Activated CD8-positive, alpha-beta T cell treated with anti-CD3 and anti-CD28 coated beads, Interleukin-2, amount 10 ng/mL, durations not matched to agents 7 days and 5 days (primary cell): ENCODE measurements at regions of chr10 and their contacts with region 1.

Region 1: GRCh38 chr10:97701438-97702069 is 12.0 kb upstream of the MARVELD1 start:
- DNase-seq: peak; percentile 70
- ATAC-seq: peak; percentile 91
- H3K4me3 Mint-ChIP-seq: no peak overlapping the region
- H3K27ac Mint-ChIP-seq: no peak overlapping the region
- H3K4me1 Mint-ChIP-seq: no peaks in the 10 kb centered on the region
- H3K27me3 Mint-ChIP-seq: peaks cover 18% of the 10 kb centered on the region

Region 2: DNA sequence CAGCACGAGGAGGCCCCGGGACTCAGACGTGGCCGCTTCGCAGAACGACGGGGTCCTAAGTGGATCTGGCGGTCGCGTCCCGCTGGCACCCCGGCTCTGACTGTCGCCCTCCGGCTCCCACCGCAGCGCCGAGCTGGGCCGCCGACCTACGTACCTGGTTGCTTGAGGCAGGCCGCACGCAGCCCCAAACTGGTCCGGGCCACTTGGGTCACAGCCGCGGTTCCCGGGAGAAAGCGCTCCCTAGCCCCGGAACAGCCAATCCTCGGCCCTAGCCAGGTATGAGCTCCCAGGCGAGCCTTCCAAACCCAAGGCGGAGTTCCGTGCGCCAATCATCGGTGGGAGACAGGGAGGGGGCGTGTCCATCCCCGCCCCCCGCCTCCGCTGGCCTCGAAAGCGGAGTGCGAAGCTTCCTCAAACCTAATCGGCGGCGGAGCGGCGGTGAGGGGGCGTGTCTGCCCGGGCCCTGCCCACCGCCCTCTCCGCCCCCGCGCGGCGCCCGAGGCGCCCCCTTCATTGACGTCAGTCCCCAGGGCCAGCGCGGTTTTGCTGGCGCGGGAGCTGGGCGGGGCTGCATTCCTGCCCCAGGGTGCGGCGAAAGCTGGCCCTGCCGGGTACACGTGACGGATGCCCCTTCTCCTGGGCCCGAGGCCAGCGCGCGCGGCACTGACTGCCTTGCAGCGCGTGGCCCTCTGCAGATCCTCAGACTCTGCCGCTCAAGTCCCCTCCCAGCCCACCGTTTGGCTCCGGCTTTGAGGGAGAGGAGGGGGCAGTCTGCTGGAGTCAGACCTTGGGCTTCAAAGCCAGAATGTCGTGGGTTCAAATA is 14.4 kb before region 1 on chr10 and contains the start of gene AVPI1:
- CTCF ChIA-PET with region 1: interaction called, 59 read pairs
- POLR2A ChIA-PET with region 1: interaction called, 7 read pairs
- DNase-seq: peak; percentile 95
- ATAC-seq: peak; percentile 97
- H3K4me3 Mint-ChIP-seq: peak within 1 kb of the TSS; percentile 82
- H3K27ac Mint-ChIP-seq: peak within 1 kb of the TSS; percentile 74
- H3K4me1 Mint-ChIP-seq: peaks cover 17% of the 10 kb centered on the region
- H3K27me3 Mint-ChIP-seq: no peaks in the 10 kb centered on the region
- total RNA-seq, gene AVPI1: 1.1 to 1.7 TPM

Region 3: GRCh38 chr10:97724341-97724941 is 22.9 kb after region 1 on chr10:
- CTCF ChIA-PET with region 1: interaction called, 75 read pairs
- POLR2A ChIA-PET with region 1: no interaction called
- DNase-seq: no peak
- ATAC-seq: no peak
- H3K4me3 Mint-ChIP-seq: no peak overlapping the region
- H3K27ac Mint-ChIP-seq: no peak overlapping the region
- H3K4me1 Mint-ChIP-seq: no peaks in the 10 kb centered on the region
- H3K27me3 Mint-ChIP-seq: peaks cover 10% of the 10 kb centered on the region

Region 4: DNA sequence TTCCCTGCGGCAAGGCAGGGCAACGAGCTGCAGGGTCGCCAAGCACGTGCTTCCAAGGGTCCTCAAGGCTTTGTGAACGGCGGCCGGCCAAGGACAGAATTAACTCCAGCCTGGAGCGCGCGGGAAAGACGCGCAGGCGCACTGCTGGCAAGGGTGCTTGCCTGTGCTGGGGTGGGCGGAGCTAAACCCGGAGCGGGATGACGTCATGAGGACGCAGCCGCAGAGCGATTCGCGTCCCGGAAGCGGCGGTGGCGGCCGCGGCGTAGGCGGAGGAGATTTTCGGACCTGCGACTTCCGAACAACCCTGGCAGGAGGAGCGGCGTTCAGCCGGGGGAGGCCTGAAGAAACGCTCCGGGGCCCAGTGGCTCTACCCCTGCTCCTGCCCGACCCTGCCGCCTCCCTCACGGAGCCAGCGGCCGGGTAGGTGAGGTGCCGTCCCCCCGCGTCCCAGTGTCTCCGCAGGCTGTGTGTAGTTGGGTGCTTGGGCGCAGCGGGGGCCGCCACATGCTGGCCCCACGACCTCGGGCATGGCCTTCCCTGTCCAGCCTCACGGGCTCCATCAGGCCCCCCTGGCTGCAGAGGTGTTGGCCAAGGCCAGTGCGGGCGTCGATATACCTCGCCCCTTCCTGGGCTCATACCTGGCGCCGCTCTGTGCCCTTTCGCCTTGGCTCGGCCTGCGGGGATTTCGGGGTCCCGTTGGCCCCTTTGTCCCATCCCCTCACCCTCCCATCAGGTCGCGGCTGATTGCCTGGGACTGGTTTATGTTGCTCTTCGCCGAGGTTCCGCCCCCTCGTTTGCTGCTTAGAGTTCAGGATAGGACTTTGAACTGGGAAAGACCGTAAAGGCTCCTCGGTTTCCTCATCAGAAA is 35.6 kb after region 1 on chr10 and contains the start of gene ZFYVE27:
- CTCF ChIA-PET with region 1: interaction called, 75 read pairs
- POLR2A ChIA-PET with region 1: no interaction called
- DNase-seq: peak; percentile 97
- ATAC-seq: peak; percentile 86
- H3K4me3 Mint-ChIP-seq: peak within 1 kb of the TSS; percentile 90
- H3K27ac Mint-ChIP-seq: peak within 1 kb of the TSS; percentile 95
- H3K4me1 Mint-ChIP-seq: peaks cover 46% of the 10 kb centered on the region
- H3K27me3 Mint-ChIP-seq: peaks cover 4% of the 10 kb centered on the region
- total RNA-seq, gene ZFYVE27: 23.8 to 27.3 TPM

Region 5: GRCh38 chr10:97764519-97764931 is 63.0 kb after region 1 on chr10:
- CTCF ChIA-PET with region 1: no interaction called
- POLR2A ChIA-PET with region 1: no interaction called
- DNase-seq: no peak
- ATAC-seq: no peak
- H3K4me3 Mint-ChIP-seq: no peak overlapping the region
- H3K27ac Mint-ChIP-seq: no peak overlapping the region
- H3K4me1 Mint-ChIP-seq: peaks cover 5% of the 10 kb centered on the region
- H3K27me3 Mint-ChIP-seq: peaks cover 3% of the 10 kb centered on the region

Region 6: GRCh38 chr10:97838091-97838490 is 136.5 kb after region 1 on chr10:
- CTCF ChIA-PET with region 1: no interaction called
- POLR2A ChIA-PET with region 1: no interaction called
- DNase-seq: no peak
- ATAC-seq: no peak
- H3K4me3 Mint-ChIP-seq: no peak overlapping the region
- H3K27ac Mint-ChIP-seq: no peak overlapping the region
- H3K4me1 Mint-ChIP-seq: peaks cover 21% of the 10 kb centered on the region
- H3K27me3 Mint-ChIP-seq: peaks cover 19% of the 10 kb centered on the region

Region 7: GRCh38 chr10:98045785-98046389 is 344.3 kb after region 1 on chr10:
- CTCF ChIA-PET with region 1: interaction called, 12 read pairs
- POLR2A ChIA-PET with region 1: no interaction called
- DNase-seq: peak; percentile 76
- ATAC-seq: peak; percentile 80
- H3K4me3 Mint-ChIP-seq: no peak overlapping the region
- H3K27ac Mint-ChIP-seq: no peak overlapping the region
- H3K4me1 Mint-ChIP-seq: no peaks in the 10 kb centered on the region
- H3K27me3 Mint-ChIP-seq: peaks cover 24% of the 10 kb centered on the region